ENCODE measurements at regions of chr4 and their contacts with region 1.

Region 1: GRCh38 chr4:47686294-47686872 is 151.5 kb downstream of the CORIN start:
- DNase-seq: peak; percentile 68
- ATAC-seq: peak; percentile 78

Region 2: GRCh38 chr4:47836641-47837093 is 150.3 kb after region 1 on chr4:
- intact Hi-C with region 1: loop called (anchors 5 kb)
- DNase-seq: peak; percentile 85
- ATAC-seq: peak; percentile 91

Region 3: DNA sequence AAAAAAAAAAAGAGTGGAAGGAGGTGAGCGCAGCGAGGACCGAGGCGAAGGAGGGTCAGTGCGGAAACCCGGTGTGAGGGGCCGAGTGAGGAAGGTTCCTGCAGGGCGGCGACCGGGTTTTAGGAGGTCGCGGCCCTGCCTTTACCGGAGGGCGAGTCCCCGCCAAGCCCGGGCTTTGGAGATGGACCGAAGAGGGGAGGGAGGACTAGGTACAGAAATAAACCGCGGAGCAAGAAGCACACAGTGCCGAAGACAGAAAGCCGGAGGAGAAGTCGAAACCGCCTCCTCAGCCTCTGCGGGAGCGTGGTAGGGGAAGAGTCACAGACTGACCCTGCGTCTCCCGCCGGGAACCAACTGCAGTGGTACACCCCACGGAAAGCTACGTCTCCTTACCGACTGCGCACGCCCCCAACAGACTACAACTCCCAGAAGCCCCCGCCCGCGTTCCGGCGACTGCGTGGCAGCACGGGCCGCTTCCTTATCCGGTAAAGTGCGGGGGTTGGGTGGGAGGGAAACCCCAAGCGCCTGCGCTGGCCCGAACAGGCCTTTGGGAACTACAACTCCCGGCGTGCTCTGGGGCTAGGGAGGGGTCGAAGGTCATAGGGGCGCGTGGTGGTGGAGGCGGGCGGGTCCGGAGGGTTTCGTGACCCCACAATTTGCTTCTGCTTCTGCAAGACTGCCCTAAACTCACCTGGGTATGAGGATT is 228.0 kb after region 1 on chr4 and contains the start of gene NFXL1:
- intact Hi-C with region 1: loop called (anchors 10 kb)
- DNase-seq: peak; percentile 99
- ATAC-seq: peak; percentile 100
- total RNA-seq, gene NFXL1: 3.9 TPM

Region 4: GRCh38 chr4:47933840-47934239 is 247.5 kb after region 1 on chr4:
- intact Hi-C with region 1: loop called (anchors 5 kb)
- DNase-seq: no peak
- ATAC-seq: no peak